Common myeloid progenitor, CD34-positive (primary cell): ENCODE measurements at regions of chr20 and their contacts with region 1.

Region 1: GRCh38 chr20:37220731-37221130 is 40.9 kb downstream of the GHRH start:
- DNase-seq: no peak
- H3K4me3 ChIP-seq: no peak overlapping the region
- H3K27ac ChIP-seq: no peak overlapping the region
- H3K4me1 ChIP-seq: no peaks in the 10 kb centered on the region
- H3K27me3 ChIP-seq: no peaks in the 10 kb centered on the region

Region 2: GRCh38 chr20:36792422-36792821 is 428.3 kb before region 1 on chr20:
- CTCF ChIA-PET with region 1: no interaction called
- POLR2A ChIA-PET with region 1: no interaction called
- DNase-seq: peak; percentile 61 to 73 (median 72)
- H3K4me3 ChIP-seq: no peak overlapping the region
- H3K27ac ChIP-seq: no peak overlapping the region
- H3K4me1 ChIP-seq: no peaks in the 10 kb centered on the region
- H3K27me3 ChIP-seq: no peaks in the 10 kb centered on the region

Region 3: DNA sequence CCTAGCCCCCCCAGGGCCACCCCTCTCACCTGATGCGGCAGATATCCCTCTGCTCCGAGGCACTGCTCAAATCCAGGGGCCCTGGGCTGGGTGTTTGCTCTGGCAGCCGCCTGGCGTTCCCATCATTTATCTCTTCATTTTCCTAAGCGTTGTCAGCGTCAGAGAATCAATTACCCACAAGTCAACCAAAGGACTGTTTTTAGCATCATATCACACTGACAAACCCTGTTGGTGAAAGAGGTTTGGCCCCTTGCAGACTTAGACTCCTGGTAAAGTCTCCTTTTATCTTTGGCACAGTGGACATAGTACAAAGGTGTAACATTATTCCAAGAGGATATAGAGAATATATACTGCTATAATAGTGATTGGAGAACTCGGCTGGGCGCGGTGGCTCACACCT is 41.0 kb after region 1 on chr20 and contains the start of gene GHRH:
- CTCF ChIA-PET with region 1: no interaction called
- POLR2A ChIA-PET with region 1: no interaction called
- DNase-seq: no peak
- H3K4me3 ChIP-seq: no peak within 1 kb of the TSS
- H3K27ac ChIP-seq: no peak within 1 kb of the TSS
- H3K4me1 ChIP-seq: peaks cover 0 to 5% (median 1%) of the 10 kb centered on the region in 4 experiments
- H3K27me3 ChIP-seq: no peaks in the 10 kb centered on the region

Region 4: GRCh38 chr20:37527638-37528441 is 307.1 kb after region 1 on chr20 and contains the start of gene BLCAP:
- CTCF ChIA-PET with region 1: no interaction called
- POLR2A ChIA-PET with region 1: interaction called, 10 read pairs
- DNase-seq: peak; percentile 88 to 92 (median 92)
- H3K4me3 ChIP-seq: peak within 1 kb of the TSS; percentile 75 to 97 (median 94)
- H3K27ac ChIP-seq: peak within 1 kb of the TSS; percentile 99 to 100
- H3K4me1 ChIP-seq: peaks cover 9 to 41% (median 33%) of the 10 kb centered on the region in 4 experiments
- H3K27me3 ChIP-seq: no peaks in the 10 kb centered on the region